ENCODE measurements at regions of chr10 and their contacts with region 1.

Region 1: DNA sequence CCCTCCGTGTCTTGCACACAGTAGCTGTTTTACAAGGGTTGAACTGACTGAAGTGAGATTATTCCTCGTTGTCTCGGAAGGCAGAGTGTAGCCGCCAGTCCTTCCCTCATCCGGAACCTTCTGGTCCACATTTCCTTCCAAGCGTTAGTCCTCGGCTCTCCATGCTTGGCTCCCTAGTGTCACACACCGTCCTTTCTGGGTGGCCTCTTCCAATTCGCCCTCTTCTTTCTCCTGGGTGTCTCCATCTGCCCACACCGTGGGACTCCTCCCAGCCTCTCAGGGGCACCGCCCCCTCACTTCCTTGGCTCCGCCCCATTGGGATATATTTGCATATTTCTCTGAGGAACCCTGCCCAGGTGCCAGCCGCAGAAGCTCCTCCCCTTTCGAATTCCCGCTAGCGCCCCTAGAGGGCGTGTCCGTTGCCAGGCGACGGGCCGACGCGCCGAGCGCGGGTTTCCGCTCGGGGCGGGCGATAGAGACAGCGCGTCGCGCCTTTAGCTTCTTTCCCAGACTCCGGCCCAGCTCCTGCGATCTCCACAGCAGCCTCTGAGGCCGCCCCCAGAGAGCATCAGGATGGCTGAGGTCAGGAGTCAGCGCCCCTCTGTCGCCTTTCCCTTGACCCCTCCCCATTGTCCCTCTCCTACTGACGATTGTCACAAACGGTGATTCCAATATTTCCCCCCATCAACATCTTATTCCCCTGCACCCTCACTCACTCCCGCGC is at the start of gene CFAP58:
- DNase-seq: peak; percentile 45
- ATAC-seq: peak; percentile 62
- H3K4me3 ChIP-seq: peak within 1 kb of the TSS in 1 of 3 experiments; percentile 17; a peak in 1 of 6 replicates
- H3K27ac ChIP-seq: no peak within 1 kb of the TSS
- H3K4me1 ChIP-seq: peaks cover 28% of the 10 kb centered on the region
- H3K27me3 ChIP-seq: peaks cover 0 to 22% of the 10 kb centered on the region in 2 experiments; a peak in 3 of 5 replicates
- CTCF ChIP-seq: peak; percentile 73
- EP300 ChIP-seq: no peak
- POLR2A ChIP-seq: no peak
- RAD21 ChIP-seq: 0 out of 2 replicates have a peak, but pooled peaks have one; percentile 16
- total RNA-seq, gene CFAP58: not detected in 2 replicates

Region 2: DNA sequence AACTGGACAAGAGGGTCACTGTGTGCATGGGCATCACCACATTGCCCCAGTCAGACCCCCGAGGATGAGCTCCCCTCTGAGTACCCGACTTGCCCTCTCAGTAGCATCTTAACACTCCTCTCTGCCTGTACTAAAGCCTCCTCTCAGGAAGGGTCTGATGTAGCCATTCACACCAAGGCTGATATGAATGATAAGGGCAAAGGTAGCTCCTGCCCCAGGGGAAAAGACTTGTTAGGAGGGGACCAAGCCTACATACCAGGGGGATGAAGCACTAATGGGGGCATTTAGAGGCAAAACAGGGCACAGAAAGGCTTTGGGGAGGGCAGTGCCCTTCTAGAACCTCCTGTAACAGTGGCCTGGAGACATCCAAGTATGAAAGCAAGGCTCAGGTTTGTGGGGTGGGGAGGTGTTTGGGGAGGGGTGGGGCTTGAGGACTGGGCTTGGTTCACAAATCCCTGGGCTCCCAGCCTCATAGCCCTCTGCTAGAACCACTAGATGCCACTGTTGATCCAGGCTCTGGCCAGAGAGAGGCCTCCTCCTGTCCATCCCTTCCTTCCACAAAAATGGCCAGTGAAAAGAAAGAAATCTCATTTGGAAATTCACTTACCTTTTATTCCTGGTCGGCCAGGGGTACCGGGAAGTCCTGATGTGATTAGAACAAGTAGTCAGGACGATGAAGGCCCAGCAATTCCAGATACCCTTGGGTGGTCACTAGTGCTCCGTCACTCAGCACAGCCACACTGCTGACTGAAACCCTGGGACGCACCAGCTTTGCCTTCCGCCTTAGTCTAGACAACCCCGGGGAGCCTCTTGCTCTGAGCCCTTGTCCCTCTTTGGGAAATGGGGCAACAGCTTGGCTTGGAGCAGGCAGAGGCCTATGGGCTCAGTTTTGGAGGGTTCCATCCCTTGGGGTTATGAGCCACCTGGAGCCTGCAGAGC is 308.1 kb before region 1 on chr10:
- CTCF ChIA-PET with region 1: no interaction called
- POLR2A ChIA-PET with region 1: no interaction called
- in situ Hi-C with region 1: loop called (anchors 10 kb)
- intact Hi-C with region 1: loop called (anchors 1 kb)
- DNase-seq: peak; percentile 45
- ATAC-seq: peak; percentile 89
- H3K4me3 ChIP-seq: no peak overlapping the region
- H3K27ac ChIP-seq: no peak overlapping the region
- H3K4me1 ChIP-seq: peaks cover 9% of the 10 kb centered on the region
- H3K27me3 ChIP-seq: peaks cover 6 to 71% of the 10 kb centered on the region in 2 experiments
- CTCF ChIP-seq: peak; percentile 70
- EP300 ChIP-seq: no peak
- POLR2A ChIP-seq: no peak
- RAD21 ChIP-seq: peak; percentile 58

Region 3: DNA sequence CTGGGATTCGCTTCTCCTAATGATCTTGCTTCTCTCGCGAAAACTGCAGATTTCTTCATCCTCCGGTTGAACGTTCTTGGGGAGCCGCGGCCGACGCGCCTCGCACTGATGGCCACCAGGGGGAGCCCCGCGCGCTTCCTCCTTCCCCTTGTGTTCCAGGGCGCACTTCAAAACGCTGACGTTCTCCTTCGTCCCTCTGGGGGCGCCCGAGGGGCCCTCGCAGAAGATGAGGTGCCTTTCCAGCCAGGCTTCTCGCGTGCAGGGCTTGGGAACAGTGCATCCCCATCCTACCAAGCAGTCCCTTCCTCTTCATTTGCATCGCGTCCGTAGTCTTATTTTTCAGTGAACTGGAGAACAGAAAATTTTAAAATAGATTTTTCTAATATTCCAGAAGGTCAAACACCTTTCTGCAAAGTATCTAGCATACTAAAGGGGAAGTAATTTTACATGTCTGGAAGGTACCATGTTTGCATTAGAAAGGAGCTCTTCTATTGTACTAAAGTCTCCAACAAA is 62.0 kb before region 1 on chr10:
- CTCF ChIA-PET with region 1: interaction called, 42 read pairs
- POLR2A ChIA-PET with region 1: no interaction called
- in situ Hi-C with region 1: no loop called
- intact Hi-C with region 1: loop called (anchors 1 kb)
- DNase-seq: peak; percentile 78
- ATAC-seq: peak; percentile 82
- H3K4me3 ChIP-seq: peak overlapping the region in 2 of 3 experiments; percentile 15 to 31; a peak in 2 of 6 replicates
- H3K27ac ChIP-seq: no peak overlapping the region
- H3K4me1 ChIP-seq: peaks cover 49% of the 10 kb centered on the region
- H3K27me3 ChIP-seq: peaks cover 0 to 11% of the 10 kb centered on the region in 2 experiments; a peak in 2 of 5 replicates
- CTCF ChIP-seq: peak; percentile 98
- EP300 ChIP-seq: 0 out of 4 replicates have a peak, but pooled peaks of 1 of the 2 experiments have one; percentile 6
- POLR2A ChIP-seq: no peak
- RAD21 ChIP-seq: peak; percentile 89

Region 4: GRCh38 chr10:104300736-104301292 is 52.7 kb before region 1 on chr10:
- CTCF ChIA-PET with region 1: interaction called, 42 read pairs
- POLR2A ChIA-PET with region 1: interaction called, 7 read pairs
- in situ Hi-C with region 1: loop called (anchors 5 kb)
- intact Hi-C with region 1: loop called (anchors 1 kb)
- DNase-seq: no peak
- ATAC-seq: peak; percentile 26; the same call in 2 of the 3 replicates
- H3K4me3 ChIP-seq: no peak overlapping the region
- H3K27ac ChIP-seq: no peak overlapping the region
- H3K4me1 ChIP-seq: peaks cover 47% of the 10 kb centered on the region
- H3K27me3 ChIP-seq: peaks cover 5 to 28% of the 10 kb centered on the region in 2 experiments; a peak in 4 of 5 replicates
- CTCF ChIP-seq: no peak; the same call in 1 of the 2 replicates
- EP300 ChIP-seq: no peak
- POLR2A ChIP-seq: no peak
- RAD21 ChIP-seq: no peak

Region 5: DNA sequence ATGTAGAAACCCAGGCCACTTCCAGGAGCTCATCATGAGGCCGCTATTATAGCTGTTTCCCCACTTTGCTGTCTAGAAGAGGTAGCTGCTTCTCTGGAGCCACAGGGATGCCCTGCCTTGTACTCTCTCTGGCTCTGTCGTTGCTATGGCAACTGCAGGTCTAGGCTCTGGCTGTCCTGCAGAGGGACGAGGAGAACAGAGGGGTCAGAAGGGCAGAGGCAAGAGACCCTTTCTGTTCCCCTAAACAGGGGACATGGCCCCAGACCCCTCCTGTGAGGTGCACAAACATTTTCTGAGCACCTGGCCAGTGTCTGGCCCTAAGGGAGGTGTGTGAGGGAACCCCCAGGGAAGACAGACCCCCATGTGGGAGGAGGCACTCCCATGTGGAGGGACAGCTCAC is 46.6 kb before region 1 on chr10:
- CTCF ChIA-PET with region 1: interaction called, 42 read pairs
- POLR2A ChIA-PET with region 1: interaction called, 7 read pairs
- in situ Hi-C with region 1: loop called (anchors 5 kb)
- intact Hi-C with region 1: loop called (anchors 1 kb)
- DNase-seq: no peak
- ATAC-seq: no peak
- H3K4me3 ChIP-seq: no peak overlapping the region
- H3K27ac ChIP-seq: no peak overlapping the region
- H3K4me1 ChIP-seq: peaks cover 24% of the 10 kb centered on the region
- H3K27me3 ChIP-seq: no peaks in the 10 kb centered on the region; a peak in 1 of 5 replicates
- CTCF ChIP-seq: no peak
- EP300 ChIP-seq: no peak
- POLR2A ChIP-seq: no peak
- RAD21 ChIP-seq: no peak